ENCODE measurements at regions of chr3 and their contacts with region 1.

Region 1: GRCh38 chr3:27484015-27484844 is at the start of gene SLC4A7:
- DNase-seq: peak; percentile 95 to 99 (median 97)
- ATAC-seq: peak; percentile 96
- H3K4me3 ChIP-seq: peak within 1 kb of the TSS; percentile 96
- H3K4me3 Mint-ChIP-seq: peak within 1 kb of the TSS; percentile 94 to 100 (median 99)
- H3K27ac ChIP-seq: peak within 1 kb of the TSS; percentile 90
- H3K27ac Mint-ChIP-seq: peak within 1 kb of the TSS; percentile 90 to 99 (median 95)
- H3K4me1 ChIP-seq: peaks cover 25 to 29% of the 10 kb centered on the region in 2 donors
- H3K4me1 Mint-ChIP-seq: peaks cover 35 to 42% (median 39%) of the 10 kb centered on the region in 7 donors
- H3K27me3 ChIP-seq: no peaks in the 10 kb centered on the region
- H3K27me3 Mint-ChIP-seq: no peaks in the 10 kb centered on the region
- total RNA-seq, gene SLC4A7: 34.9 to 69.1 (median 41.5) TPM

Region 2: DNA sequence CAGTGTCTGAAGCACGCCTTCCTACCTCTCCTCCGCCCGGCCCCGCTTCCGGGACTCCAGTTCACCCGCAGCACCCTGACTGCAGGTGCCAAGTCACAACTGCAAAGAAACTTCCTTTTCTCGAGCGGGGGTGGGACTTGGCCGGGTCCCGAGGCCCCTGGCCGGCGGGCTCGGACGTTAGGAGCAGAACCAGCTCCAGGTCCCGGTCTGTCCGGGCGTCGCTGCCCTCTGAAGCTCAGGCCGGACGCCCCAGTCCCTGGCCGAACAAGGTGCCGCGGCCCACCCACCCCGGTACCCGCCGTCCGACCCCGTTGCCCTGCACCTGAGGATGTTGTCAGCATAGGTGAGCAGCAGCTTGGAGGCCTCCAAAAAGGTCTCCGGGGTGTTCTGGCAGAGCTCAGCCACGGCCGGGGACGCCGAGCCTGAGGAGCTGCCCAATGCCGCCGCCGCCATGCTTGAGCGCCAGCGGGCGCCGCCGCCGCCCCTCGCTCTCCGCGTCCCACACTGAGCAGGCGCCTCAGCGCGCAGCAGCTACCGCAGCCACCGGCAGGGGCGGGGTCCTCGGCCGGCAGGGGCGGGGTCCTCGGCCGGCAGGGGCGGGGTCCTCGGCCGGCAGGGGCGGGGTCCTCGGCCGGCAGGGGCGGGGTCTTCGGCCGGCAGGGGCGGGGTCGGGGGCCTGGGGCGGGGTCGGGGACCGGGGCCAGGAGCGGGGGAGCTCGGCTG is 1701.1 kb before region 1 on chr3 and contains the start of gene NGLY1:
- CTCF ChIA-PET with region 1: no interaction called
- POLR2A ChIA-PET with region 1: no interaction called
- intact Hi-C with region 1: loop called in 1 of 2 experiments (anchors 2 kb)
- DNase-seq: peak; percentile 78 to 88 (median 83)
- ATAC-seq: peak; percentile 95
- H3K4me3 ChIP-seq: peak within 1 kb of the TSS; percentile 73
- H3K4me3 Mint-ChIP-seq: peak within 1 kb of the TSS; percentile 85 to 95 (median 92)
- H3K27ac ChIP-seq: peak within 1 kb of the TSS; percentile 89
- H3K27ac Mint-ChIP-seq: peak within 1 kb of the TSS; percentile 78 to 93 (median 87)
- H3K4me1 ChIP-seq: peaks cover 19 to 28% of the 10 kb centered on the region in 2 donors
- H3K4me1 Mint-ChIP-seq: peaks cover 25 to 61% (median 46%) of the 10 kb centered on the region in 7 donors
- H3K27me3 ChIP-seq: no peaks in the 10 kb centered on the region
- H3K27me3 Mint-ChIP-seq: no peaks in the 10 kb centered on the region
- total RNA-seq, gene NGLY1: 66.1 to 84.1 (median 70.4) TPM

Region 3: GRCh38 chr3:27454914-27455313 is 29.3 kb before region 1 on chr3:
- CTCF ChIA-PET with region 1: no interaction called
- POLR2A ChIA-PET with region 1: no interaction called
- intact Hi-C with region 1: loop called in 1 of 2 experiments (anchors 1 kb)
- DNase-seq: peak in 1 of 9 donors; percentile 11
- ATAC-seq: no peak
- H3K4me3 ChIP-seq: no peak overlapping the region
- H3K4me3 Mint-ChIP-seq: peak overlapping the region in 3 of 10 donors; percentile 12 to 37 (median 20)
- H3K27ac ChIP-seq: no peak overlapping the region
- H3K27ac Mint-ChIP-seq: peak overlapping the region in 2 of 9 donors; percentile 26 to 41
- H3K4me1 ChIP-seq: peaks cover 7 to 13% of the 10 kb centered on the region in 2 donors
- H3K4me1 Mint-ChIP-seq: peaks cover 24 to 72% (median 63%) of the 10 kb centered on the region in 7 donors
- H3K27me3 ChIP-seq: no peaks in the 10 kb centered on the region
- H3K27me3 Mint-ChIP-seq: no peaks in the 10 kb centered on the region

Region 4: GRCh38 chr3:27590437-27591298 is 106.4 kb after region 1 on chr3:
- CTCF ChIA-PET with region 1: no interaction called
- POLR2A ChIA-PET with region 1: no interaction called
- intact Hi-C with region 1: loop called in 1 of 2 experiments (anchors 2 kb)
- DNase-seq: no peak
- ATAC-seq: peak; percentile 73
- H3K4me3 ChIP-seq: no peak overlapping the region
- H3K4me3 Mint-ChIP-seq: peak overlapping the region in 7 of 10 donors; percentile 0 to 56 (median 46)
- H3K27ac ChIP-seq: no peak overlapping the region
- H3K27ac Mint-ChIP-seq: peak overlapping the region; percentile 6 to 78 (median 41)
- H3K4me1 ChIP-seq: peaks cover 25 to 26% of the 10 kb centered on the region in 2 donors
- H3K4me1 Mint-ChIP-seq: peaks cover 23 to 33% (median 26%) of the 10 kb centered on the region in 7 donors
- H3K27me3 ChIP-seq: no peaks in the 10 kb centered on the region
- H3K27me3 Mint-ChIP-seq: no peaks in the 10 kb centered on the region

Region 5: GRCh38 chr3:27659279-27660021 is 175.2 kb after region 1 on chr3:
- CTCF ChIA-PET with region 1: no interaction called
- POLR2A ChIA-PET with region 1: no interaction called
- intact Hi-C with region 1: loop called in 1 of 2 experiments (anchors 2 kb)
- DNase-seq: peak in 5 of 9 donors; percentile 23 to 42 (median 33)
- ATAC-seq: peak; percentile 74
- H3K4me3 ChIP-seq: no peak overlapping the region
- H3K4me3 Mint-ChIP-seq: no peak overlapping the region
- H3K27ac ChIP-seq: no peak overlapping the region
- H3K27ac Mint-ChIP-seq: no peak overlapping the region
- H3K4me1 ChIP-seq: no peaks in the 10 kb centered on the region
- H3K4me1 Mint-ChIP-seq: peaks cover 0 to 6% (median 0%) of the 10 kb centered on the region in 7 donors
- H3K27me3 ChIP-seq: no peaks in the 10 kb centered on the region
- H3K27me3 Mint-ChIP-seq: peaks cover 0 to 8% (median 0%) of the 10 kb centered on the region in 5 donors

Region 6: GRCh38 chr3:27721717-27722542 is 237.7 kb after region 1 on chr3 and contains the start of gene EOMES:
- CTCF ChIA-PET with region 1: no interaction called
- POLR2A ChIA-PET with region 1: no interaction called
- intact Hi-C with region 1: loop called in 1 of 2 experiments (anchors 2 kb)
- DNase-seq: peak; percentile 57 to 81 (median 71)
- ATAC-seq: peak; percentile 84
- H3K4me3 ChIP-seq: peak within 1 kb of the TSS; percentile 68
- H3K4me3 Mint-ChIP-seq: peak within 1 kb of the TSS; percentile 79 to 93 (median 86)
- H3K27ac ChIP-seq: no peak within 1 kb of the TSS
- H3K27ac Mint-ChIP-seq: peak within 1 kb of the TSS in 3 of 9 donors; percentile 8 to 74 (median 56)
- H3K4me1 ChIP-seq: peaks cover 16 to 30% of the 10 kb centered on the region in 2 donors
- H3K4me1 Mint-ChIP-seq: peaks cover 19 to 42% (median 31%) of the 10 kb centered on the region in 7 donors
- H3K27me3 ChIP-seq: peaks cover 0 to 41% of the 10 kb centered on the region in 2 donors
- H3K27me3 Mint-ChIP-seq: peaks cover 44 to 89% (median 63%) of the 10 kb centered on the region in 5 donors
- total RNA-seq, gene EOMES: 0.67 to 9.5 (median 1.4) TPM

Region 7: DNA sequence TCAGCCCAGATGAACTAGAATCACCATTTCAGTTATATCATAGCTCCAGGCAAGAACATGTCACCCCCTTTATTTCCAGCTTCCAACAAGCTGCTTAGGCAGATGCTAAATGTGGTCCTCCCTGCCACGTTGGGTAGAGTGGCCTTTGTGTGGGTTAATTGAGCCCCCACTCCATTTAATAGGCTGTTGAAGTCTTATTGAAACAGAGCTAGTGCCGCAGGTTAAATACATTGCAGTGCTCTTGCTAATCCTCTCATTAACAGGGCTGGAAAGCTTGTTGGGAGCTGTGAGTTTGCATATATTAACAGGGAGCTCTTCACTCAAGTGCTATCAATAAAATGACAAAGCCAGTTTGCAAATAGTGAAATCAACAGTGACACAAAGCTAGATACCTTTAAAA is 508.8 kb after region 1 on chr3:
- CTCF ChIA-PET with region 1: no interaction called
- POLR2A ChIA-PET with region 1: no interaction called
- intact Hi-C with region 1: no loop called
- DNase-seq: no peak
- ATAC-seq: no peak
- H3K4me3 ChIP-seq: no peak overlapping the region
- H3K4me3 Mint-ChIP-seq: no peak overlapping the region
- H3K27ac ChIP-seq: no peak overlapping the region
- H3K27ac Mint-ChIP-seq: no peak overlapping the region
- H3K4me1 ChIP-seq: no peaks in the 10 kb centered on the region
- H3K4me1 Mint-ChIP-seq: peaks cover 0 to 5% (median 0%) of the 10 kb centered on the region in 7 donors
- H3K27me3 ChIP-seq: no peaks in the 10 kb centered on the region
- H3K27me3 Mint-ChIP-seq: no peaks in the 10 kb centered on the region

Region 8: GRCh38 chr3:28348629-28349483 is 864.6 kb after region 1 on chr3 and contains the starts of genes AZI2 and ZCWPW2:
- CTCF ChIA-PET with region 1: no interaction called
- POLR2A ChIA-PET with region 1: interaction called, 4 read pairs
- intact Hi-C with region 1: loop called (anchors 1 kb)
- DNase-seq: peak; percentile 88 to 93 (median 92)
- ATAC-seq: peak; percentile 92
- H3K4me3 ChIP-seq: peak within 1 kb of the TSS; percentile 93
- H3K4me3 Mint-ChIP-seq: peak within 1 kb of the TSS; percentile 88 to 99 (median 94)
- H3K27ac ChIP-seq: peak within 1 kb of the TSS; percentile 92
- H3K27ac Mint-ChIP-seq: peak within 1 kb of the TSS; percentile 96 to 100 (median 98)
- H3K4me1 ChIP-seq: peaks cover 35 to 39% of the 10 kb centered on the region in 2 donors
- H3K4me1 Mint-ChIP-seq: peaks cover 30 to 70% (median 57%) of the 10 kb centered on the region in 7 donors
- H3K27me3 ChIP-seq: no peaks in the 10 kb centered on the region
- H3K27me3 Mint-ChIP-seq: no peaks in the 10 kb centered on the region
- total RNA-seq, gene AZI2: 39.7 to 54.0 (median 41.2) TPM
- total RNA-seq, gene ZCWPW2: 0.56 to 1.3 (median 0.81) TPM